Activated naive CD4-positive, alpha-beta T cell treated with anti-CD3 and anti-CD28 coated beads for 36 hours (primary cell): ENCODE measurements at regions of chr16 and their contacts with region 1.

Region 1: DNA sequence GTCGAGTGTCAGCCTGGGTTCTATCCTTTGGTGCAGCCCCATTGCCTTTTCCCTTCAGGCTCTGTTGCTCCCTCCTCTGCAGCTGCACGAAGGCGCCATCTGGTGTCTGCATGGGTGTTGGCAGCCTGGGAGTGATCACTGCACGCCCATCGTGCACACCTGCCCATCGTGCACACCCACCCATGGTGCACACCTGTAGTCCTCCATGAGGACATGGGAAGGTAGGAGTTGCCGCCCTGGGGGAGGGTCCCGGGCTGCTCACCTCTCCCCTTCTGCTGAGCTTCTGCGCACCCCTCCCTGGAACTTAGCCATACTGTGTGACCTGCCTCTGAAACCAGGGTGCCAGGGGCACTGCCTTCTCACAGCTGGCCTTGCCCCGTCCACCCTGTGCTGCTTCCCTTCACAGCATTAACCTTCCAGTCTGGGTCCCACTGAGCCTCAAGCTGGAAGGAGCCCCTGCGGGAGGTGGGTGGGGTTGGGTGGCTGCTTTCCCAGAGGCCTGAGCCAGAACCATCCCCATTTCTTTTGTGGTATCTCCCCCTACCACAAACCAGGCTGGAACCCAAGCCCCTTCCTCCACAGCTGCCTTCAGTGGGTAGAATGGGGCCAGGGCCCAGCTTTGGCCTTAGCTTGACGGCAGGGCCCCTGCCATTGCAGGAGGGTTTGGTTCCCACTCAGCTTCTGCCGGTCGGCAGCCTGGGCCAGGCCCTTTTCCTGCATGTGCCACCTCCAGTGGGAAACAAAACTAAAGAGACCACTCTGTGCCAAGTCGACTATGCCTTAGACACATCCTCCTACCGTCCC is 2.9 kb downstream of the CTRL start:
- DNase-seq: peak; percentile 91
- H3K4me3 Mint-ChIP-seq: no peak overlapping the region
- H3K27ac Mint-ChIP-seq: no peak overlapping the region
- H3K4me1 Mint-ChIP-seq: peaks cover 2% of the 10 kb centered on the region
- H3K27me3 Mint-ChIP-seq: no peaks in the 10 kb centered on the region

Region 2: DNA sequence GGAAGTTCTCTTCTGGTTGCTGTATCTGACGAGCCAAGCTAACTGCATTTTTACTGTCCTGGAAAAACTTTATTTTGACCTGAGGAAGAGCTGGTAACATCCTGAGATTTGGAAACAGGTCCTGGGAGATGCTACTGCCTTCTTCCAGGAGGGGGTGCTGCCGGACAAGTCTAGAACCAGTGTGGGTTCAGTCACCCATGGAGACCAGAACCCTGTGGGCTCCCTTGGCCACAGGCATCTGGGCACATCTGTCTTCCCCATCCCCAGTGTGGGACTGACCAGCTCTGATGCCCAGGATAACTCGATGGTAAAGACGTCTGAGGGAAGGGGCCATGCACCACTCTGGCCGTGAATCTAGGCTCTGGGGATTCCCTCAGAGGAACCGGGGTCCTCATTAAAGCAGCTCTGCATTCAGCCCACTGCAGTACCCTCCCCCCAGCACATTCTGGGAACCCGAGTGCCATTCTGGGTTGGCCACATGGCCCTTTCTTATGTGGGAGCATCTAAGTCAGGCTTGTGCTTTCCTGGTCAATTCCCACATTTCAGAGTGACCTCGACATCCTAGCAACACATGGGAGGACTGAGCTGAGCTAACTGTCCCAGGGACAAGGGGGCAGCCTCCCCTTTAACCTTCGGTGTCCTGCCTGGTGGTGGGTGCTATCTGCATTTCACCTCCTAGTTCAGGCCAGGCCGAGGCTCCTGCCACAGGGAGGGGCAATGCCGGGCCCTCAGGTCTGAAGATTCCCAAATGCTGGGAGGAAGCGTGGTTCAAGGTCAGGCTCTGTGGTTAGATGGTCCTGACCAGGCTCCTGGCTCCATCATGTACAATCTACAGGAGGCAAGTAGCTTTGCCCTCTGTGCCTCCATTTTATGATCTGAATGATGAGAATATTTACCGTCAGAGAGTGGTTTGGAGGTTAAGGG is 255.8 kb before region 1 on chr16:
- CTCF ChIA-PET with region 1: no interaction called
- intact Hi-C with region 1: loop called (anchors 1 kb)
- DNase-seq: peak; percentile 74
- H3K4me3 Mint-ChIP-seq: no peak overlapping the region
- H3K27ac Mint-ChIP-seq: no peak overlapping the region
- H3K4me1 Mint-ChIP-seq: peaks cover under 1% of the 10 kb centered on the region
- H3K27me3 Mint-ChIP-seq: no peaks in the 10 kb centered on the region

Region 3: GRCh38 chr16:67872786-67873537 is 55.8 kb before region 1 on chr16 and contains the start of gene EDC4:
- CTCF ChIA-PET with region 1: no interaction called
- intact Hi-C with region 1: loop called (anchors 2 kb)
- DNase-seq: peak; percentile 86
- H3K4me3 Mint-ChIP-seq: peak within 1 kb of the TSS; percentile 92
- H3K27ac Mint-ChIP-seq: peak within 1 kb of the TSS; percentile 87
- H3K4me1 Mint-ChIP-seq: peaks cover 27% of the 10 kb centered on the region
- H3K27me3 Mint-ChIP-seq: no peaks in the 10 kb centered on the region
- total RNA-seq, gene EDC4: 72.2 to 78.7 TPM

Region 4: GRCh38 chr16:67917852-67918236 is 10.9 kb before region 1 on chr16:
- CTCF ChIA-PET with region 1: interaction called, 6 read pairs
- intact Hi-C with region 1: loop called (anchors 1 kb)
- DNase-seq: peak; percentile 81
- H3K4me3 Mint-ChIP-seq: no peak overlapping the region
- H3K27ac Mint-ChIP-seq: peak overlapping the region; percentile 89
- H3K4me1 Mint-ChIP-seq: peaks cover 38% of the 10 kb centered on the region
- H3K27me3 Mint-ChIP-seq: no peaks in the 10 kb centered on the region